Panc1 (cell line): ENCODE measurements at regions of chr17 and their contacts with region 1.

Region 1: GRCh38 chr17:77140166-77140878 is 447 bp upstream of the SEC14L1 start:
- DNase-seq: peak; percentile 62
- ATAC-seq: peak; percentile 92
- H3K4me3 ChIP-seq: peak overlapping the region; percentile 46 to 50
- H3K27ac ChIP-seq: peak overlapping the region; percentile 96
- H3K4me1 ChIP-seq: peaks cover 40% of the 10 kb centered on the region
- H3K27me3 ChIP-seq: no peaks in the 10 kb centered on the region
- CTCF ChIP-seq: no peak

Region 2: GRCh38 chr17:77011173-77012011 is 128.9 kb before region 1 on chr17:
- CTCF ChIA-PET with region 1: no interaction called
- POLR2A ChIA-PET with region 1: interaction called, 11 read pairs
- in situ Hi-C with region 1: no loop called
- intact Hi-C with region 1: no loop called
- DNase-seq: peak; percentile 4
- ATAC-seq: no peak
- H3K4me3 ChIP-seq: no peak overlapping the region
- H3K27ac ChIP-seq: no peak overlapping the region
- H3K4me1 ChIP-seq: no peaks in the 10 kb centered on the region
- H3K27me3 ChIP-seq: no peaks in the 10 kb centered on the region
- CTCF ChIP-seq: no peak; the same call in 1 of the 2 replicates

Region 3: GRCh38 chr17:77109764-77110359 is 30.5 kb before region 1 on chr17:
- CTCF ChIA-PET with region 1: no interaction called
- POLR2A ChIA-PET with region 1: interaction called, 18 read pairs
- in situ Hi-C with region 1: no loop called
- intact Hi-C with region 1: no loop called
- DNase-seq: no peak
- ATAC-seq: no peak
- H3K4me3 ChIP-seq: no peak overlapping the region
- H3K27ac ChIP-seq: peak overlapping the region; percentile 86
- H3K4me1 ChIP-seq: peaks cover 18% of the 10 kb centered on the region
- H3K27me3 ChIP-seq: no peaks in the 10 kb centered on the region
- CTCF ChIP-seq: no peak

Region 4: DNA sequence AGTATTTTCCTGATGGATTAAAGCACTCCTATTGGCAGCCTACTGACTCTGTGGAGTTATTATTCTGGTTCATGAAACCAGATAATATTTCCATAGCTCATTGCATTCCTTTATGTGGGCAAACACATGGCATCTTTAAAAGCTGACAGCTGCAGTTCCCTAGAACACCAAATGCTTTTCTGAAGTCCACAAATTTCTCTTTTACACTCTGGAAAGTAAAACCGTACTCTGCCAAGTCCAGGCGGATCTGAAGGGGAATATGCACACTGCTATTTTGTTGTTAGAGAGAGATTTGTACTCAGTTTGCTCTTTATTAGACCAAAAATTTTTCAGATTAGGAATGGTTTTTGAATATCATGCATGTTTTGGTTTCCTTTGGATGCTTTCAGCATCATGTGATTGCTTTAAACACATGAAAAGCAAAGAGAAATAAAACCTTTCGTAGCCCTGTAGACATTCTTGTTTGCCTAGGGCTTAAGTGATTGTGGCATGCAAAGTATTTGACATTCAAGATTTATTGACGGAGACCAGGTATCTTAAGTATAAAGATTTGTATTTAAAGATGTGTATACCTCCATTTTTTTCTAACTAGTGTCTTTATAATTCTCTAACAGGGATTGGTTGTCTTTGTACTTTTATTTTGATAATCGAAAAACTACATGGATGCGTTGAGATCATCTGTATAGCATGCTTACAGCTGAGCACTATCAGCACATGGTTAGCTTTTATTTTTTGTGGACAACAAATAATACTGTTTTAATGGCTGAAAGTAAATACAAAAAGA is 20.0 kb after region 1 on chr17:
- CTCF ChIA-PET with region 1: no interaction called
- POLR2A ChIA-PET with region 1: interaction called, 14 read pairs
- in situ Hi-C with region 1: no loop called
- intact Hi-C with region 1: no loop called
- DNase-seq: no peak
- ATAC-seq: 0 out of 2 replicates have a peak, but pooled peaks have one; percentile 36
- H3K4me3 ChIP-seq: no peak overlapping the region
- H3K27ac ChIP-seq: peak overlapping the region; percentile 66
- H3K4me1 ChIP-seq: peaks cover 44% of the 10 kb centered on the region
- H3K27me3 ChIP-seq: no peaks in the 10 kb centered on the region
- CTCF ChIP-seq: no peak

Region 5: GRCh38 chr17:77254951-77255825 is 114.9 kb after region 1 on chr17:
- CTCF ChIA-PET with region 1: no interaction called
- POLR2A ChIA-PET with region 1: no interaction called
- in situ Hi-C with region 1: no loop called
- intact Hi-C with region 1: no loop called
- DNase-seq: peak; percentile 75
- ATAC-seq: peak; percentile 90
- H3K4me3 ChIP-seq: peak overlapping the region in 1 of 2 experiments; percentile 20; a peak in 2 of 4 replicates
- H3K27ac ChIP-seq: peak overlapping the region; percentile 97
- H3K4me1 ChIP-seq: peaks cover 38% of the 10 kb centered on the region
- H3K27me3 ChIP-seq: no peaks in the 10 kb centered on the region
- CTCF ChIP-seq: no peak

Region 6: GRCh38 chr17:77372444-77373298 is 232.3 kb after region 1 on chr17:
- CTCF ChIA-PET with region 1: no interaction called
- POLR2A ChIA-PET with region 1: no interaction called
- in situ Hi-C with region 1: no loop called
- intact Hi-C with region 1: no loop called
- DNase-seq: no peak
- ATAC-seq: peak; percentile 70
- H3K4me3 ChIP-seq: peak overlapping the region; percentile 43 to 54
- H3K27ac ChIP-seq: peak overlapping the region; percentile 74
- H3K4me1 ChIP-seq: peaks cover 84% of the 10 kb centered on the region
- H3K27me3 ChIP-seq: no peaks in the 10 kb centered on the region
- CTCF ChIP-seq: no peak

Region 7: GRCh38 chr17:77382966-77383612 is 242.8 kb after region 1 on chr17:
- CTCF ChIA-PET with region 1: no interaction called
- POLR2A ChIA-PET with region 1: no interaction called
- in situ Hi-C with region 1: no loop called
- intact Hi-C with region 1: no loop called
- DNase-seq: no peak
- ATAC-seq: peak; percentile 7; the same call in 1 of the 2 replicates
- H3K4me3 ChIP-seq: no peak overlapping the region
- H3K27ac ChIP-seq: peak overlapping the region; percentile 45; the same call in 1 of the 2 replicates
- H3K4me1 ChIP-seq: peaks cover 96% of the 10 kb centered on the region
- H3K27me3 ChIP-seq: no peaks in the 10 kb centered on the region
- CTCF ChIP-seq: no peak